ENCODE measurements at regions of chr14 and their contacts with region 1.

Region 1: DNA sequence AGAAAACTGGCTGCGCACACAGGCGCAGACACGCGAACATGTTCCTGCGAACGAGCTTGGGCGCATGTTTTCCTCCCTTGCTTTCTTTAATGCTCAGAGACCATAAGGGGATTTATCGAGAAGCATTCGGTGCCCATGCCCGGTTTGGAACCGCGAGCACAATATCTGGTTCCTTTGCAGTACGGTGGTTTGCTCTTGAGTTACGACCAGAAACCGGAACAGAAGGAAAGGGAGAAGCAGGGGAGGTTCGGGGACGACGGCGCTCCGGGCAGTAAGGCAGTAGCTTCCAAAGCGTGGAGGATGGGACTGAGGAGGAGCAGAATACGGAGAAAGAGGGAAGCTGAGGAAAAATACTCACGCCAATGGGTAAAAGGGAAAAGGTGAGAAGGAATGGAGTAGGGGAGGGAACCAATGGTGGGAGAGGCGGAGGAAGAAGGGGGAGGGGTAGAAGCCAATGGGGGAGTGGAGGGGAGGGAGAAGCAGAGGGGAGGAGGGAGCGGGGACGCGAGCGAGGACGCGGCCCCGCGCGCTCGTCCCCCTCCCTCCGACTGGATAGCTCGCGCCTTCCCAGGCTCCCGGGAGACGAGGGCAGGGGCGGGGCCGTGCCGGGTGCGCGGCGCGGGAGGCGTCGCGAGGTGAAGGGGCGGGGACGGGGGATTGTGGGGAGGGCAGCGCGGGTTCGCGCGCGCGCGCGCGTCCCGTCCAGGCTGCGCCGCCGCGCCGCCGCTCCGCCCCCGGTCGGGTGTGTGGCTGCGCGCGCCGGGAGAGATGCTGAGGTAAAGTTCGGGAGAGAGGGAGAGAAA is 625 bp upstream of the ARHGAP5 start:
- DNase-seq: peak; percentile 97
- ATAC-seq: peak; percentile 77
- H3K4me3 ChIP-seq: peak overlapping the region; percentile 93
- H3K27ac ChIP-seq: peak overlapping the region; percentile 90
- H3K4me1 ChIP-seq: peaks cover 32% of the 10 kb centered on the region
- H3K27me3 ChIP-seq: no peaks in the 10 kb centered on the region
- CTCF ChIP-seq: no peak

Region 2: GRCh38 chr14:31510222-31510621 is 566.3 kb before region 1 on chr14:
- CTCF ChIA-PET with region 1: no interaction called
- POLR2A ChIA-PET with region 1: interaction called, 12 read pairs
- intact Hi-C with region 1: loop called (anchors 1 kb)
- DNase-seq: peak; percentile 58
- ATAC-seq: peak; percentile 38
- H3K4me3 ChIP-seq: no peak overlapping the region
- H3K27ac ChIP-seq: no peak overlapping the region
- H3K4me1 ChIP-seq: no peaks in the 10 kb centered on the region
- H3K27me3 ChIP-seq: no peaks in the 10 kb centered on the region
- CTCF ChIP-seq: peak; percentile 87

Region 3: GRCh38 chr14:31726337-31726736 is 350.1 kb before region 1 on chr14:
- CTCF ChIA-PET with region 1: no interaction called
- POLR2A ChIA-PET with region 1: no interaction called
- intact Hi-C with region 1: no loop called
- DNase-seq: no peak
- ATAC-seq: no peak
- H3K4me3 ChIP-seq: no peak overlapping the region
- H3K27ac ChIP-seq: no peak overlapping the region
- H3K4me1 ChIP-seq: no peaks in the 10 kb centered on the region
- H3K27me3 ChIP-seq: no peaks in the 10 kb centered on the region
- CTCF ChIP-seq: no peak

Region 4: DNA sequence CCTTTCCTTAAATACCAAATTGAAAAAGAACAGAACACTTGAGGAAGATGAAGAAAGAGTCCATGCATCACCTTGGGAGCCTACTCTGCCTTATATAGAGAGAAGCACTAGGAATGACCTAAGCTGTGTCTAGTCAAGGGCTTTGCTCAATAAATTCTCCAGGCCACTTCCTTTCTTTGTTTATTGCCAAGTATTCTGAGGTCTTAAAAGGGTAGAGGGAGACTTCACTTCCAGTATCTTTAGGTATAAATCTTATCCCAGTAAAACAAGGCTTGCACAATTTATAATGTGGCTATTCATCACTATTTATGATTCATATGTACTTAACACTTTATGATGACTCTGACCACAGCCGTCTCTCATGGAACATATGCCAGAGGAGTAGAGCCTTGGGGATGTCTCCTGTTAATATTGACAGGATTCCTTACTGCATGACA is 84.5 kb before region 1 on chr14:
- CTCF ChIA-PET with region 1: interaction called, 9 read pairs
- POLR2A ChIA-PET with region 1: no interaction called
- intact Hi-C with region 1: loop called (anchors 1 kb)
- DNase-seq: peak; percentile 92
- ATAC-seq: peak; percentile 88
- H3K4me3 ChIP-seq: no peak overlapping the region
- H3K27ac ChIP-seq: peak overlapping the region; percentile 75
- H3K4me1 ChIP-seq: peaks cover 33% of the 10 kb centered on the region
- H3K27me3 ChIP-seq: no peaks in the 10 kb centered on the region
- CTCF ChIP-seq: no peak

Region 5: GRCh38 chr14:32064931-32065330 is 11.5 kb before region 1 on chr14:
- CTCF ChIA-PET with region 1: no interaction called
- POLR2A ChIA-PET with region 1: no interaction called
- intact Hi-C with region 1: no loop called
- DNase-seq: no peak
- ATAC-seq: no peak
- H3K4me3 ChIP-seq: no peak overlapping the region
- H3K27ac ChIP-seq: no peak overlapping the region
- H3K4me1 ChIP-seq: no peaks in the 10 kb centered on the region
- H3K27me3 ChIP-seq: no peaks in the 10 kb centered on the region
- CTCF ChIP-seq: no peak

Region 6: DNA sequence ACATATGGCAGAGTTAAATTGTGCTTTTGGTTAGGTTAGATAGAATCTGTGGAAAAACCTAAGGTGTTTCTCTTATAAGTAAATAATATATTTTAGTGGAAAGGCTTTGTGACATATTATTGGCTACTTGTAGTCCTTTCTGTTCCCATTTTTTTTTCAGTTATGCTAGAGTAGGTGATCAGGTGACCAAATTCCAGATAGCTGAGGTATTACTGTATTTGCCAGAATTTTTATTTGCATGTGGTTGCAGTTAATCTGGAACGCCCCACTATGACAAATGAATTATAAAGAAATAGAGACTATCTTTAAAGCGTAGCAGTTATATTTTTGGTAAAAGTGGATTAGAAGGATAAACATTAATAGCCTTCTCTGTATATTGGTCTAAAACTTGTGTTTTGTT is 52.6 kb after region 1 on chr14:
- CTCF ChIA-PET with region 1: no interaction called
- POLR2A ChIA-PET with region 1: no interaction called
- intact Hi-C with region 1: loop called (anchors 1 kb)
- DNase-seq: peak; percentile 81
- ATAC-seq: peak; percentile 95
- H3K4me3 ChIP-seq: peak overlapping the region; percentile 11; the same call in 1 of the 2 replicates
- H3K27ac ChIP-seq: peak overlapping the region; percentile 64
- H3K4me1 ChIP-seq: peaks cover 21% of the 10 kb centered on the region
- H3K27me3 ChIP-seq: no peaks in the 10 kb centered on the region
- CTCF ChIP-seq: no peak

Region 7: DNA sequence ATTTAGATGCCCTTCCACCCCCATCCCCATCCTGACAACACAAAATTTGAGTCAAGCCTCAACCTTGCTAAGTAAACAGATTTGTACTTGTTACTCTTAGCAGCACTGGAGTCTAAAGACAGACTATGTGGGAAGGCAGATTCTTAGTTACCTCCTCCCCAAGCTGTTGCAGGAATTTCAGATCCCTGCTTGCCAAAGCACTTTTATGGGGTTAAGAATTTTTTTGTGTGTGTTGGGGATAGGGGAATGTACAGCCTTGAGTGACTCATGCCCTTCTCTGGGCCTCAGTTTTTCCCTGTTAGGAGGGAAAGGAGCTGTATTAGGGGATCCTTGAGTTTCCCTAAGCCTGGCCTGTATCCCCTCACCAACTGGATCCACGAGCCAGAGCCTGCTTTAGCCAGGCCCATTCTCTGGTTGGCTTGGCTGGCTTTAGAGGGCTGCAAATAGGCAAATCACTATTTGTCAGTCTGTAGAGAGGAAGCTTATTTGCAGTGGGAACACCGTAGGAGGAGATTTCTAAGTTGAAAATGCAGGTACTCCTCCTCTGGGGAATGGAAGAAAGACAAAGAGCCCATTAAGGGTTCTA is 154.3 kb after region 1 on chr14:
- CTCF ChIA-PET with region 1: interaction called, 12 read pairs
- POLR2A ChIA-PET with region 1: no interaction called
- intact Hi-C with region 1: loop called (anchors 1 kb)
- DNase-seq: peak; percentile 73
- ATAC-seq: peak; percentile 62
- H3K4me3 ChIP-seq: peak overlapping the region; percentile 26; the same call in 1 of the 2 replicates
- H3K27ac ChIP-seq: peak overlapping the region; percentile 77
- H3K4me1 ChIP-seq: peaks cover 50% of the 10 kb centered on the region
- H3K27me3 ChIP-seq: no peaks in the 10 kb centered on the region
- CTCF ChIP-seq: no peak

Region 8: GRCh38 chr14:32341947-32342846 is 265.7 kb after region 1 on chr14:
- CTCF ChIA-PET with region 1: no interaction called
- POLR2A ChIA-PET with region 1: no interaction called
- intact Hi-C with region 1: no loop called
- DNase-seq: peak; percentile 66
- ATAC-seq: peak; percentile 74
- H3K4me3 ChIP-seq: no peak overlapping the region
- H3K27ac ChIP-seq: no peak overlapping the region
- H3K4me1 ChIP-seq: peaks cover 10% of the 10 kb centered on the region; the same call in 1 of the 2 replicates
- H3K27me3 ChIP-seq: no peaks in the 10 kb centered on the region
- CTCF ChIP-seq: no peak

Region 9: DNA sequence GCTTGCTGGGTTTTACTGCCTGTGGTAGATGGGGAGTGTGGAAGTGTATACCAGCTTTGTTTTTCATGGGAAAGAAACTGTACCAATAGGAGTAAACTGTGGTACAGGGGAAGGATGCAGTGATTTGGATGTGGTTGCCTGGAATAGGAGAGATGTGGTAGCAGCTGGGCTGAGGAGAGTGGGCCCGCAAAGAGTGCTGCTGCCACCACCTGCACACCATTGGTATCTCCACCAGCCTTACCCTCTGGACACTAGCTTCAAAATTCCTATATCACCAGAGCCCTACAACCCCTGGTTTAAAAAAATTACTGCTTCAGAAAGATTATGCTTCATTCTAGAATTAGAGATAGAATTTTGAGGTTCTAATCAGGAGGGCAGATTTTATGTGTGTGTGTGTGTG is 306.2 kb after region 1 on chr14:
- CTCF ChIA-PET with region 1: interaction called, 6 read pairs
- POLR2A ChIA-PET with region 1: interaction called, 3 read pairs
- intact Hi-C with region 1: loop called (anchors 1 kb)
- DNase-seq: peak; percentile 59
- ATAC-seq: peak; percentile 97
- H3K4me3 ChIP-seq: no peak overlapping the region
- H3K27ac ChIP-seq: no peak overlapping the region
- H3K4me1 ChIP-seq: peaks cover 28% of the 10 kb centered on the region
- H3K27me3 ChIP-seq: no peaks in the 10 kb centered on the region
- CTCF ChIP-seq: peak; percentile 88

Measured in PC-3 (cell line).